ENCODE measurements at regions of chr1 and their contacts with region 1.

Region 1: GRCh38 chr1:63975481-63975880 is 201.7 kb downstream of the ROR1 start:
- DNase-seq: no peak
- H3K4me3 Mint-ChIP-seq: no peak overlapping the region
- H3K27ac Mint-ChIP-seq: no peak overlapping the region
- H3K4me1 Mint-ChIP-seq: peaks cover 5% of the 10 kb centered on the region
- H3K27me3 Mint-ChIP-seq: no peaks in the 10 kb centered on the region
- CTCF ChIP-seq: no peak

Region 2: DNA sequence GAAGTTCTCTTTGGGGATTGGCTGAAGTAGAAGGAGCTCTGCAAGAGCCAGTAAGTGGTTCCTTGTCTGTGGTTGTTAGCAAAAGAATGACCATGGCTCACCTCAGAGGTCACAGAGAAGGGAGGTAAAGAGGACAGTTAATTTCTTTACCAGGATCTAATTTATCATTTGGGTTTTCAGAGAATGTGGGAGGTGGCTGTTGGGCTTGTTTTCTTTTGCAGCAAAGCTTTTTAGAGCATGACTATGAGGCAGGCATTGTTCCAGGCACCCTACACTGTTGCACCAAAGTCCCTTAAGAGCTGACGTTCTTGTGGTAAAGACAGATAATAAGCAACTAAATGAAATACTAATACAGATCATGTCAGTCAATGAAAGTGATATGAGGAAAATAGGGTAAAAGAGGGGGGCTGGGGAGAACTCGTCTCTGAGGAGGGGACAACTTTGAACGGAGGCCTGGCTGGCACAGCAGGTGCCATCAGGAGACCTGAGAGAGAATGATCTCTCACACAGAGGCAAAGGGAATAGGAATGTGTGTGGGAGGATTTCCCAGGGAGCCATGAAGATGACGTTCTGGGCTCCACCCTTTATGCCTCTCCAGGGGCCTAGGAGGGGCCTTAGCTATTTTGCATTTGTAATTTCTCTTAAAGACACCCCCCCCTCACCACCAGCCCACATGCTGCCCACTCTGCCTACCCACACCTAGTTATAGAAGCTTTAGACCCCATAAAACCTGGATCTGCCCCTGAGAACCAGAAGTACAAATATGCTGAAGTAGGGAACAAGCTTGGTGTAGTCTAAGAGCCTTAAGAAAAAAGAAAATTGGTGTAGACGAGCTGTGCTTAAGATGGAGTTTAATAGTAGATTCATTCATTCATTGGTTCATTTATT is 24.2 kb before region 1 on chr1:
- CTCF ChIA-PET with region 1: no interaction called
- POLR2A ChIA-PET with region 1: interaction called, 3 read pairs
- intact Hi-C with region 1: loop called (anchors 1 kb)
- DNase-seq: no peak
- H3K4me3 Mint-ChIP-seq: no peak overlapping the region
- H3K27ac Mint-ChIP-seq: no peak overlapping the region
- H3K4me1 Mint-ChIP-seq: no peaks in the 10 kb centered on the region
- H3K27me3 Mint-ChIP-seq: no peaks in the 10 kb centered on the region
- CTCF ChIP-seq: no peak

Region 3: GRCh38 chr1:63960326-63960725 is 15.2 kb before region 1 on chr1:
- CTCF ChIA-PET with region 1: interaction called, 10 read pairs
- POLR2A ChIA-PET with region 1: interaction called, 6 read pairs
- intact Hi-C with region 1: no loop called
- DNase-seq: peak; percentile 61
- H3K4me3 Mint-ChIP-seq: no peak overlapping the region
- H3K27ac Mint-ChIP-seq: no peak overlapping the region
- H3K4me1 Mint-ChIP-seq: no peaks in the 10 kb centered on the region
- H3K27me3 Mint-ChIP-seq: no peaks in the 10 kb centered on the region
- CTCF ChIP-seq: no peak